PC-9 (cell line): ENCODE measurements at regions of chr7 and their contacts with region 1.

Region 1: GRCh38 chr7:107528466-107528865 is 35.3 kb downstream of the COG5 start:
- DNase-seq: peak; percentile 14 to 51
- H3K4me3 ChIP-seq: no peak overlapping the region
- H3K27ac ChIP-seq: no peak overlapping the region
- H3K4me1 ChIP-seq: peaks cover 12% of the 10 kb centered on the region
- H3K27me3 ChIP-seq: no peaks in the 10 kb centered on the region
- CTCF ChIP-seq: no peak

Region 2: DNA sequence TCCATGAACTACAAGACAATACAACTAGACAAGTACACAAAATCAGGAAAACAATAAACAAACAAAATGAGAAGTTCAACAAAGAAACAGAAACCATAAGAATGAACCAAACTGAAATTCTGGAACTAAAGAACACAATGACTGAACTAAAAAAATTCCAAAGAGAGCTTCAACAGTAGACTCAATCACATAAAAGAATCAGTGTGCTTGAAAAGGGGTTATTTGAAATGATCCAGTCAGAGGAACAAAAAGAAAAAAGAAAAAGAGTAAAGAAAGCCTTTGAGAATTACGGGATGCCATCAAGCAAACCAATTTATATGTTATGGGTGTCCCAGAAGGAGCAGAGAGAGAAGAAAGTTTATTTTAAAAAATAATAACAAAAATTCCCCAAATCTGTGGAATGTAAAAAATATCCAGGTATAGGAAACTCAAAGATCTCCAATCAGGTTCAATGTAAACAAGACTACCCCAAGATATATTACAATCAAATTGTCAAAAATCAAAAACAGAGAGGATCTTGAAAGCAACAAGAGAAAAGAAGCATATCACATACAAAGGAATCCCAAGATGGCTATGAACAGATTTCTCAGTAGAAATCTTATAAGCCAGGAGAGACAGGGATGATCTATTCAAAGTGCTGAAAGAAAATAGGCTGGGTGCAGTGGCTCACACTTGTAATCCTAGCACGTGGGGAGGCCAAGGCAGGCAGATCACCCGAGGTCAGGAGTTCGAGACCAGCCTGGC is 16.6 kb after region 1 on chr7:
- CTCF ChIA-PET with region 1: interaction called, 15 read pairs
- POLR2A ChIA-PET with region 1: interaction called, 7 read pairs
- intact Hi-C with region 1: no loop called
- DNase-seq: no peak
- H3K4me3 ChIP-seq: no peak overlapping the region
- H3K27ac ChIP-seq: no peak overlapping the region
- H3K4me1 ChIP-seq: no peaks in the 10 kb centered on the region
- H3K27me3 ChIP-seq: no peaks in the 10 kb centered on the region
- CTCF ChIP-seq: no peak